ENCODE measurements at regions of chr11 and their contacts with region 1.

Region 1: DNA sequence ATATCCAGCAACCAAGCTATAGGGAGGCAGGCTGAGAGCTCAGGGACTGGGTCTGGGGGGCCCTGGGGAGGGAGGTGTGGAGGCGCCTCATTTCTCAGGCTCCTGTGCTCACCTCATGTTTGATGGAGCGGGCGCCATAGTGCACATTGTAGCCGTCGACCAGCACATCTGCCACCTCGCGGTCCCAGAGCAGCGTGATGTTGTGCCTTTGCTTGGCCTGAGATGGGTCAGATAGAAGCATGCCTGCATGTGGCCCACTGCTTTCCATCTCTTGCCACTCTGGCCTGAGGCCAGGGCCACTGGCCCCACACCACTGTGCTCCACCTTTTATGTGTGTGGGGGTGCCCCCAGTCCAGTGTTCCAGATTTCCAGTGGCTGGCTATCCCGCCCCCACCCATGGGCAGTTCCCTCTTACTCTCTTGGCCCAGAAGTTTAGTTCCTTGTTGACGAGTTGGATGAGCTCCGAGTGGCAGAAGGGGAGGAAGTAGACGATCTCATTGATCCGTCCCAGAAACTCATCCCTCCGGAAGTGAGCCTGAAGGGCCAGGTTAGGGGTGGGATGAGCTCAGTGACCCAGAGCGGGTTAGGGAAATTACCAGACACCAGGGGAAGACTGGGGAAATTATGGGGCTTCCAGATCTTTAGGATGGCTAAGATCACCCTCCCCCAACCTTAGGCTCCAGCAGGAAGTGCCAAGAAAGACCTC is 50.1 kb upstream of the PHOX2A start:
- DNase-seq: peak in 1 of 2 experiments; percentile 34
- H3K4me3 ChIP-seq: no peak overlapping the region
- H3K27ac ChIP-seq: no peak overlapping the region
- H3K4me1 ChIP-seq: no peaks in the 10 kb centered on the region
- H3K27me3 ChIP-seq: no peaks in the 10 kb centered on the region
- CTCF ChIP-seq: no peak
- EP300 ChIP-seq: no peak
- POLR2A ChIP-seq: no peak
- RAD21 ChIP-seq: no peak

Region 2: DNA sequence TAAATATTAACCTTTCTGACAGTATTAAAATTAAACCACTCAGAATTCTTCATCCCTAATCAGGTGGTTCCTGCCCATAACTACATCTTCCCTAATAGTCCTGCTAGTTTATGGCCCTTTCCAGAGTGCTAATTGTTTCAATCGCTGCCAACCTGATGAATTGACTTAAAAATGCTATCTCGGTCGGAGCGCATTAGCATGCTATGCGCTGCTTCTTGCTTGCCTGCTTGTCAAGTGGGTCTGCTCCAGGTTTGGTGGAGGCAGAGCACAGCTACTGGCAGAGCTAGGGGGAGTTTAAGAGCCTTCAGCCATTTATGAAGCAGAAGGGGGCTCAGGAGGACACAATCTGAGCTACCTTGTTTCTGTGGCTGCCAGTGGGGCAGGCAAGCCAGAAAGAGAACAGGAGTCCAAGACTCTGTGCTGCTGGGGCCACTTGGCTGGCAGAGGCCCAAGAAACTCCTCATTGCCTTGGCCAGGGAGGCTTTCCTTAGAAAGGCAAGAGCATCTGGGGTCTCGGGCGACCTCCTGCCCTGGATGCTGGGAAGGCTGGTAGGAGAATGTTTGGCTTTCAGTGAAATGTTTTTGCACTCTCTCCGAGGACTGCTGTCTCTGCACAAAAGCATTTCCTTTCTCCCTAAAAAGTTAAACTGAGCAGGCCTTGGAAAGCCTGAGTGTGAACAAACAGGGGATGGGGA is 12.0 kb after region 1 on chr11:
- CTCF ChIA-PET with region 1: interaction called, 57 read pairs
- POLR2A ChIA-PET with region 1: interaction called, 3 read pairs
- DNase-seq: no peak
- H3K4me3 ChIP-seq: no peak overlapping the region
- H3K27ac ChIP-seq: no peak overlapping the region
- H3K4me1 ChIP-seq: no peaks in the 10 kb centered on the region
- H3K27me3 ChIP-seq: no peaks in the 10 kb centered on the region
- CTCF ChIP-seq: no peak
- EP300 ChIP-seq: no peak
- POLR2A ChIP-seq: no peak
- RAD21 ChIP-seq: no peak

Region 3: DNA sequence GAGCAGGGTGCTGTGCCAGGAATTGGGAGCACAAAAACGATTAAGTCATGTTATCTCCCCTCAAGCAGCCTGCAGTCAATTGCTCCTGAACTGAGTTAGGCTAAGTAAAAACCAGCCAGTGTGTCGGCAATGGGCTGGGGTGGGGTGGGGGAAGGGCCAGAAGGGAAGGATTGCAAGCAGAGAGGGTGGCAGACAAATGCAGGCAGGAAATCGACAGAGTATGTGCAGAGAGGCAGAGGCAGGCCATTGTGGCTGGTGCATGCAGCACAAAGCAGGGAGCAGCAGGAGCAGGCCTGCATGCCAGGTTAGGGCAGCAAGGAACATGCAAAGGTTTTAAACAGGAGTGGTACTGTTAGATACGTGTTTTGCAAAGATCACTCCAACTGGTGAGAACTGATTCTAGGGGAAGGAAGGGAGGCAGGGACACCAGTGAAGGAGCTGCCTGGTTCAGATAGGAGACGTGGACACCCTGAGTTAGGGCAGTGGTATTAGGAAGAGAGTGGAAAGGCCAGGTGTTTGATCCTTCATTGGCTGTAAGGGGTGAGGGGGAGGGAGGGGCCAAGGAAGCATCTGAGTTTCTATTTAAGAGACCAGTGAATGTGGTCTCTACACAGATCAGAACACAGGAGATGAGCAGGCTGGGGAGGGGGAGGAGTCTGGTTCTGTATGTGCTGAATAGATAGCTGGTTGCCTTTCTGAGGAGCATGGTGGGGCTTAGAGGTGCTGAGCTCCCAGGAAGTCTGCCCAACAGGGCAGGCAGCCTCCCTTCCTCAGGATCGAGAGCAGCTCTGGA is 20.7 kb after region 1 on chr11:
- CTCF ChIA-PET with region 1: interaction called, 23 read pairs
- POLR2A ChIA-PET with region 1: no interaction called
- DNase-seq: no peak
- H3K4me3 ChIP-seq: no peak overlapping the region
- H3K27ac ChIP-seq: 0 out of 2 replicates have a peak overlapping the region, but pooled peaks have one; percentile 3
- H3K4me1 ChIP-seq: peaks cover 0 to 8% (median 5%) of the 10 kb centered on the region in 4 experiments; a peak in 6 of 7 replicates
- H3K27me3 ChIP-seq: no peaks in the 10 kb centered on the region
- CTCF ChIP-seq: no peak
- EP300 ChIP-seq: no peak
- POLR2A ChIP-seq: no peak
- RAD21 ChIP-seq: no peak

Region 4: GRCh38 chr11:72772978-72773690 is 479.1 kb after region 1 on chr11:
- CTCF ChIA-PET with region 1: no interaction called
- POLR2A ChIA-PET with region 1: no interaction called
- DNase-seq: no peak
- H3K4me3 ChIP-seq: no peak overlapping the region
- H3K27ac ChIP-seq: no peak overlapping the region
- H3K4me1 ChIP-seq: peaks cover 0 to 8% (median 7%) of the 10 kb centered on the region in 4 experiments; a peak in 4 of 7 replicates
- H3K27me3 ChIP-seq: no peaks in the 10 kb centered on the region
- CTCF ChIP-seq: no peak
- EP300 ChIP-seq: no peak
- POLR2A ChIP-seq: no peak
- RAD21 ChIP-seq: no peak